ENCODE measurements at regions of chr6 and their contacts with region 1.

Region 1: DNA sequence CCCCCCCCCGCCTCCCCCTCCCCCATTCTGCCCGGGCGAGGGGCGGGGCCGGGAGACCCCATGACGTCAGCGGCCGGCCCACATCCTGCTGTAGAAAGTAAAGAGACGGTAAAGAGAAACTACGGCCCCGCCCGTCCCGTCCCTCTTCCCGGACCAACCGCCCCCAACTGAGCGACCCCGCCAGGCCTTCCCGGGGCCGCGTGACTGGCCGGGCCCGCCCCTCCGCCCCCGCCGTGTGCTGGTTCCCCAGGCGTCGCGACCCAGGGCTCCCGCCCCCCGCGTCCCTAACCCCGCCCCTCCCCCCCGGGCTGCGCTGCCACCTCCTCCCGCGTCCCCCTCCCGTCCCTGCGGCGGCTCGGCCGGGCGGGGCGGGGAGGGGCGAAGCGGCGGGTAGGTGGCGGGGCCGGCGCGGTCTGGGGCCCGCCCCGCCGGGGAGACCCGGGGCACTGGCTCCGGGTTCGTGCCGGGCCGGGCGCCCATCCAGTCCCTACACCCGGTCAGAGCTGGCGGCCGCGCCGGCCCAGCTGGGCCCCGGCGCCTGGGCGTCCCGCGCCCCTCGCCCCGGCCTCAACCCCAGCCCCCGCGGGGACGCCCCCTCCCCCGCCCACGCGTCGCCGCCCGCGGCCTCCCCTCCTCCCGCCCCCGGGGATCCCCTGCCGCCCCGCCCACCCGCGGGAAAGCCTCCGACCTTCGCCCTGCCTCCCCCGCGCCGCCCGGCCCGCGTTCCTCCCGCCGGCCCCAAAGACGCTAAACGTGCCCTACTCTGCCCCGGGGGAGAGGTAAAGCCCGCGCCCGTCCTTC is 636 bp upstream of the HIVEP1 start:
- DNase-seq: peak; percentile 83 to 99 (median 94)
- ATAC-seq: peak; percentile 83
- H3K4me3 ChIP-seq: no peak overlapping the region
- H3K4me3 Mint-ChIP-seq: peak overlapping the region; percentile 91 to 99 (median 94)
- H3K27ac ChIP-seq: peak overlapping the region; percentile 73
- H3K27ac Mint-ChIP-seq: peak overlapping the region; percentile 97 to 100 (median 98)
- H3K4me1 ChIP-seq: peaks cover 14 to 26% of the 10 kb centered on the region in 2 donors
- H3K4me1 Mint-ChIP-seq: peaks cover 15 to 68% (median 58%) of the 10 kb centered on the region in 7 donors
- H3K27me3 ChIP-seq: no peaks in the 10 kb centered on the region
- H3K27me3 Mint-ChIP-seq: peaks cover 0 to 5% (median 0%) of the 10 kb centered on the region in 5 donors

Region 2: DNA sequence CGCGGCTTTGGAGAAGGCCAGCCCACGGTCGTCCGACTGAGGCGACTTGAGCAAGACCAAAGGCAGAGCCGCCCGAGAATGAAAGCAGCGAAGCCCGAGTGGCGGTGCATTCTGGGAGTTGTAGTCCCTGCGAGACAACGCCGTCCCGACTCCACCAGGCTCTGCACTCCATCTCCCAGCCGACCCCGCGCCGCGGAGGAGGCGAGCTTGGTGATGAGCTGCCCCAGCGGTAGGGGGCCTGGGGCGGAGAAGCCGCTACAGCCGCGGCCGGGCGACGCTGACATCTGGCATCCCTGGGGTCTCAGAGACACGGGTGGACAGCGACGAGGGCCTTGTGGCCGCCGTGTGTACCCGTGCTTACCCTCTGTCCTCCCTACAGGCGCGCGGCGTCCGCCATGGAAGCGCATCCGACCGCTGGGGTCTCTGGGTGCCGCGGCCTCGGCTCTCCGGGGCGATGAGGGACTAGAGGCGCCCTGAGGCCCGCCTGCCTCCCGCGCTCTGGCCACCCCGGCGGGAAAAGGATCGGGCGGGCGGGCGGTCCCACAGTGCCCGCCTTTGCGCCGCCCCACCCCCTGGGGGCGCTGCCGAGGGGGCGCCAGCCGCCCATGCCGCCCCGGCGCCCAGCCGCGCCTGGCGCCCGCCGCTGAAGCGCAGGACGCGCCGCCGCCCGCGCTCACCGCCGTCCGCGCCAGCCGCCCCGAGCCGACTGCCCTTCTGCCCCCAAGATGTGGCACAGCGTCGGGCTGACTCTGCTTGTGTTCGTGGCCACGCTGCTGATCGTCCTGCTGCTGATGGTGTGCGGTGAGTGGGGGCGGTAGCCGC is 917.7 kb before region 1 on chr6 and contains the start of gene SMIM13:
- CTCF ChIA-PET with region 1: no interaction called
- POLR2A ChIA-PET with region 1: no interaction called
- intact Hi-C with region 1: loop called in 1 of 2 experiments (anchors 1 kb)
- DNase-seq: peak; percentile 85 to 94 (median 93)
- ATAC-seq: peak; percentile 96
- H3K4me3 ChIP-seq: peak within 1 kb of the TSS; percentile 97
- H3K4me3 Mint-ChIP-seq: peak within 1 kb of the TSS; percentile 83 to 98 (median 97)
- H3K27ac ChIP-seq: peak within 1 kb of the TSS; percentile 88
- H3K27ac Mint-ChIP-seq: peak within 1 kb of the TSS; percentile 89 to 98 (median 97)
- H3K4me1 ChIP-seq: peaks cover 11 to 14% of the 10 kb centered on the region in 2 donors
- H3K4me1 Mint-ChIP-seq: peaks cover 21 to 43% (median 27%) of the 10 kb centered on the region in 7 donors
- H3K27me3 ChIP-seq: no peaks in the 10 kb centered on the region
- H3K27me3 Mint-ChIP-seq: no peaks in the 10 kb centered on the region
- total RNA-seq, gene SMIM13: 4.0 to 9.9 (median 4.4) TPM

Region 3: GRCh38 chr6:11653028-11653583 is 358.4 kb before region 1 on chr6:
- CTCF ChIA-PET with region 1: no interaction called
- POLR2A ChIA-PET with region 1: no interaction called
- intact Hi-C with region 1: loop called in 1 of 2 experiments (anchors 1 kb)
- DNase-seq: peak in 5 of 9 donors; percentile 3 to 48 (median 9)
- ATAC-seq: peak; percentile 49
- H3K4me3 ChIP-seq: no peak overlapping the region
- H3K4me3 Mint-ChIP-seq: peak overlapping the region in 1 of 10 donors; percentile 3
- H3K27ac ChIP-seq: no peak overlapping the region
- H3K27ac Mint-ChIP-seq: peak overlapping the region in 4 of 9 donors; percentile 8 to 70 (median 24)
- H3K4me1 ChIP-seq: peaks cover 0 to 4% of the 10 kb centered on the region in 2 donors
- H3K4me1 Mint-ChIP-seq: peaks cover 0 to 19% (median 5%) of the 10 kb centered on the region in 7 donors
- H3K27me3 ChIP-seq: no peaks in the 10 kb centered on the region
- H3K27me3 Mint-ChIP-seq: peaks cover 0 to 4% (median 0%) of the 10 kb centered on the region in 5 donors

Region 4: DNA sequence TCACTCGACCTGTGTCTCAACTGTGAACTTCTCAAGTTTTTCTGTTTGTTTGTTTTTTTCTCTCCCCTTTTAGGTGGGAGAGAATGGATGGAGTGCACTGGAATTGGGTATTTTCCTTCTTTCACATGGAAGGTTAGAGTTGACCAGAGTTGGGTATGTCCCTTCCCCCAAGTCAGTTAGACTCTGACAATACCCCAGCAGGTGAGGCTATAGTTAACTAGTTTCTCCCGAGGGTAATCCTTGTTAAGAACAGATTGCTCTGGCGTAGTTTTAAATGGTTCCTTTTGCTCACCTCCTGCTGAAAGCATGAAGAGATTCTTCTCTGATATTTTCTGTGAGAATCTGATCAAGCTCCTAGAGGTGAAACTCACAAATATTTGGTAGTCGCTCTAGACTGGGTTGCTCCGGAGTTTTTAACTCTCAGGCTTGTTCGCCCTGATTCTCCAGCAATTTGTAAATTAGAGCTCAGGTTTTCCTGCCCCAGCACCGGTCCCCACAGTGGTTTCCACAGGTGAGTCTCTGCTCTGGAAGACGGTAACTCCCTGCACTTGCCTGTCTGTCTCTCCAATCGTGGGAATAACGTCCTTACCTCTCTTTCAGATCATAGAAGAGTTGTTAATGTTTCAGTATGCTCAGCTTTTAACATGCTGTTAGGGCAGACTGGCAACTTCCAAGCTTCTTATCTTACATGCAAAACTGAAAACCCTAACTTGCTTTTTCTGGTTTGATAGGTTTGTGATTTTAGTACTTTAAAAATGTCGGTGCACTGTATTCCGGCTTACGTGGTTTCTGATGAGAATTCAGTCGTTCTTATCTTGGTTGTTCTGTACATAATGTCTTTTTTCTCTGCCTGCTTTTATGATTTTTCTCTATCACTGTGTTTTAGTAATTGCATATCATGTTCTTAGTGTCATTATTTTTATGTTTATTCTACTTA is 110.5 kb before region 1 on chr6:
- CTCF ChIA-PET with region 1: no interaction called
- POLR2A ChIA-PET with region 1: no interaction called
- intact Hi-C with region 1: loop called (anchors 2 to 5 kb)
- DNase-seq: peak in 5 of 9 donors; percentile 23 to 58 (median 47)
- ATAC-seq: peak; percentile 61
- H3K4me3 ChIP-seq: peak overlapping the region; percentile 38
- H3K4me3 Mint-ChIP-seq: peak overlapping the region in 9 of 10 donors; percentile 39 to 86 (median 83)
- H3K27ac ChIP-seq: peak overlapping the region; percentile 44
- H3K27ac Mint-ChIP-seq: peak overlapping the region in 8 of 9 donors; percentile 2 to 92 (median 84)
- H3K4me1 ChIP-seq: peaks cover 0 to 8% of the 10 kb centered on the region in 2 donors
- H3K4me1 Mint-ChIP-seq: peaks cover 7 to 36% (median 31%) of the 10 kb centered on the region in 7 donors
- H3K27me3 ChIP-seq: no peaks in the 10 kb centered on the region
- H3K27me3 Mint-ChIP-seq: peaks cover 0 to 11% (median 0%) of the 10 kb centered on the region in 5 donors

Region 5: GRCh38 chr6:12024699-12025434 is 13.4 kb after region 1 on chr6:
- CTCF ChIA-PET with region 1: interaction called, 3 read pairs
- POLR2A ChIA-PET with region 1: interaction called, 3 read pairs
- intact Hi-C with region 1: loop called in 1 of 2 experiments (anchors 1 kb)
- DNase-seq: no peak
- ATAC-seq: no peak
- H3K4me3 ChIP-seq: no peak overlapping the region
- H3K4me3 Mint-ChIP-seq: peak overlapping the region in 5 of 10 donors; percentile 1 to 47 (median 27)
- H3K27ac ChIP-seq: no peak overlapping the region
- H3K27ac Mint-ChIP-seq: peak overlapping the region in 4 of 9 donors; percentile 23 to 74 (median 43)
- H3K4me1 ChIP-seq: peaks cover 0 to 22% of the 10 kb centered on the region in 2 donors
- H3K4me1 Mint-ChIP-seq: peaks cover 26 to 83% (median 71%) of the 10 kb centered on the region in 7 donors
- H3K27me3 ChIP-seq: no peaks in the 10 kb centered on the region
- H3K27me3 Mint-ChIP-seq: no peaks in the 10 kb centered on the region

Region 6: DNA sequence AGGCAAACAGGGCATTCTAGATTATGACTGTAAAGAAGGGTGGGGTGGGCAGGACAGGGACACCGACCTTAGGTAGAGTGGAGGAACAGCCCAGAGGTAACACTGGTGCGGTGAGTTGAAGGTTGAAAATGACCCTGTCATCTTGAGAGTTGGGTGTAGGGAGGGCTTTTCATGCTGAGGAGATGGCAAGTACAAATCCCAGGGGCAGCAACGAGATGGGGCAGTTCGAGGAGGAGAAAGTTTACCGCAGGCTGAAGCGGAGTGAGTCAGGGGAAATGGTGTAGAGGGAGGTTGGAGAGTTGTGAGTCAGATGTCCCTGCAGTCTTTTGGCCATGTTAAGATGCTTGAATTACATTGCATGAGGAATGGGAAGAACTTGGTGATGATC is 101.7 kb after region 1 on chr6:
- CTCF ChIA-PET with region 1: no interaction called
- POLR2A ChIA-PET with region 1: interaction called, 4 read pairs
- intact Hi-C with region 1: loop called in 1 of 2 experiments (anchors 2 kb)
- DNase-seq: no peak
- ATAC-seq: no peak
- H3K4me3 ChIP-seq: no peak overlapping the region
- H3K4me3 Mint-ChIP-seq: peak overlapping the region in 9 of 10 donors; percentile 5 to 77 (median 14)
- H3K27ac ChIP-seq: no peak overlapping the region
- H3K27ac Mint-ChIP-seq: peak overlapping the region in 8 of 9 donors; percentile 1 to 79 (median 52)
- H3K4me1 ChIP-seq: peaks cover 6 to 40% of the 10 kb centered on the region in 2 donors
- H3K4me1 Mint-ChIP-seq: peaks cover 47 to 79% (median 69%) of the 10 kb centered on the region in 7 donors
- H3K27me3 ChIP-seq: no peaks in the 10 kb centered on the region
- H3K27me3 Mint-ChIP-seq: no peaks in the 10 kb centered on the region

Region 7: GRCh38 chr6:12182676-12183075 is 171.2 kb after region 1 on chr6:
- CTCF ChIA-PET with region 1: no interaction called
- POLR2A ChIA-PET with region 1: no interaction called
- intact Hi-C with region 1: no loop called
- DNase-seq: no peak
- ATAC-seq: peak; percentile 49
- H3K4me3 ChIP-seq: no peak overlapping the region
- H3K4me3 Mint-ChIP-seq: no peak overlapping the region
- H3K27ac ChIP-seq: no peak overlapping the region
- H3K27ac Mint-ChIP-seq: no peak overlapping the region
- H3K4me1 ChIP-seq: no peaks in the 10 kb centered on the region
- H3K4me1 Mint-ChIP-seq: peaks cover 0 to 10% (median 6%) of the 10 kb centered on the region in 7 donors
- H3K27me3 ChIP-seq: no peaks in the 10 kb centered on the region
- H3K27me3 Mint-ChIP-seq: peaks cover 0 to 31% (median 0%) of the 10 kb centered on the region in 5 donors

Region 8: DNA sequence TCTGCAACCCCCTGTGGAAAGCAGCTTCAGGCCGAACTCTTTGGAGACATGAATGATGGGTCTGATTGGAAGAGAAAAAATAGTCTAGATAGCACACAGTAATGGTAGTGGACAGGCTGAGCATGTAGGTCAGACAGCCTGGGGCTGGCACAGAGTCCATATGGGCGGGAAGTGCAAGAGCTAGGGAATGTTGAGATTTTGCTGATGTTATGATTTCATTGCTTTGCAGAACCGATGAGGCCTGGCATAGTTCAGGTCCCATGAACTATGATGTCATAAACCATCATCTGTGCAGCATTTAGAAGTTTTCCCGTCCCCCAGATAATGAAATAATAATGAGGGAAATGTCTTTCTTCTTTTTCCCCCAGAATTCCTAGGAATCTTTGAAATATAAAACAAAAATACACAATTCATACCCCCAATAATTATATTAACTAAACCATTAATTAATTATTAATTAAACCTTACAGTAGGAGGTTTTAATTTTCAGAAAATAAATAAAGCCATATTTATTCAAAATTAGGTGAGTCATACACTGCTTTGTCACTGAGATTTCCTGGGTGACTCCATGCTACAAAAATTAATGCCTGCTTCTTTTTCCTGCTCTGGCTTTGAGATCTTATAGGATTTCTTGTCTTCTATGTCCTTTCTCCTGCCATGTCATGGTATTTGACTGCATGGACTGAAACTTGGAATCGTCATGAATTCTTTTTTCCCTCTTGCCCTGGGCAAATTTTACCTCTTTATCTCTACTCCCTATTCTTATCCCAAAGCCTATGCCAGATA is 838.1 kb after region 1 on chr6:
- CTCF ChIA-PET with region 1: no interaction called
- POLR2A ChIA-PET with region 1: no interaction called
- intact Hi-C with region 1: no loop called
- DNase-seq: no peak
- ATAC-seq: no peak
- H3K4me3 ChIP-seq: no peak overlapping the region
- H3K4me3 Mint-ChIP-seq: no peak overlapping the region
- H3K27ac ChIP-seq: no peak overlapping the region
- H3K27ac Mint-ChIP-seq: no peak overlapping the region
- H3K4me1 ChIP-seq: no peaks in the 10 kb centered on the region
- H3K4me1 Mint-ChIP-seq: no peaks in the 10 kb centered on the region
- H3K27me3 ChIP-seq: no peaks in the 10 kb centered on the region
- H3K27me3 Mint-ChIP-seq: peaks cover 2 to 32% (median 22%) of the 10 kb centered on the region in 5 donors

Region 9: DNA sequence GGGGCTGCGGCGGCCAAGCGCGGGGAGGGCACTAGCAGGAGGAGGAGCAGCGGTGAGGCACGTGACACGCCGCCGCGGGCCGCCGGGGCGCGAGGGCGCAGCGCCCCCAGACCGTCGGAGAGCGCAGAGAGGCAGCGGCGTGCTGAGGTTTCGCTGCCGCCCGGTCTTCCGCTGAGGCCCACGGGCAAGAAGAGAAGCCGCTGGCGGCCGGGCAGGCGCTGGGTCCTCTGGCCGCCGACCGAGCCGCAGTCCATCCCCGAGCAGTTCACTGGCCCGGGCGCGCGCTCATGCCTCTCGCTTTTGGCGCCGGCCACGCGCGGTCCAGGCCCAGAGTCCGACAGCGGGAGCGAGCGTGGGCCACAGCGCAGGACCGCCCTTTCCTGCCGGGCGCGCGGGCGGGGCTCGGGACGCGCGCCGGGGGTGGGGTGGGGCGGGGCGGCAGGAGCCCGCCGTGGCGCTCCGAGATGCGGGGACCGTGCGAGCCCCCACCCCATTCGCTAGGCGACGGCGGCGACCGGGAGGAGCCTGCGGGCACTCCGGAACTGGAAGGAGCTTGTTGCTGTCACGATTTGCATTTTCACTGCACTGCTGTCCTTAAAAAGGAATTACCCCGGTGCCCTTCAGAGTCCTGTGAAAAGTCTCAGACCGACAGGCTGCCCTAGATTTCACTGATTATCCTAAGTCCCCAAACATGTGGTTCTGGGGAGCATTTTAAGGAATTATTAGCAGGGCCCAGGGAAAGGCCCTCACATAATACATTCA is 1802.9 kb after region 1 on chr6 and contains the start of gene MCUR1:
- CTCF ChIA-PET with region 1: no interaction called
- POLR2A ChIA-PET with region 1: no interaction called
- intact Hi-C with region 1: loop called (anchors 10 kb)
- DNase-seq: peak; percentile 69 to 87 (median 76)
- ATAC-seq: peak; percentile 91
- H3K4me3 ChIP-seq: peak within 1 kb of the TSS; percentile 71
- H3K4me3 Mint-ChIP-seq: peak within 1 kb of the TSS; percentile 87 to 92 (median 90)
- H3K27ac ChIP-seq: peak within 1 kb of the TSS; percentile 82
- H3K27ac Mint-ChIP-seq: peak within 1 kb of the TSS; percentile 60 to 93 (median 85)
- H3K4me1 ChIP-seq: peaks cover 0 to 13% of the 10 kb centered on the region in 2 donors
- H3K4me1 Mint-ChIP-seq: peaks cover 17 to 40% (median 38%) of the 10 kb centered on the region in 7 donors
- H3K27me3 ChIP-seq: no peaks in the 10 kb centered on the region
- H3K27me3 Mint-ChIP-seq: peaks cover 0 to 25% (median 0%) of the 10 kb centered on the region in 5 donors
- total RNA-seq, gene MCUR1: 5.7 to 20.6 (median 10.0) TPM